B cell (primary cell): ENCODE measurements at regions of chr14 and their contacts with region 1.

Region 1: GRCh38 chr14:103520657-103521437 is 1.8 kb downstream of the CKB start:
- DNase-seq: peak; percentile 85
- ATAC-seq: peak; percentile 78
- H3K4me3 ChIP-seq: peak overlapping the region in 4 of 5 experiments; percentile 52 to 75 (median 59)
- H3K4me3 Mint-ChIP-seq: peak overlapping the region; percentile 74
- H3K27ac ChIP-seq: no peak overlapping the region
- H3K27ac Mint-ChIP-seq: peak overlapping the region; percentile 50
- H3K4me1 ChIP-seq: peaks cover 22 to 31% of the 10 kb centered on the region in 2 donors
- H3K4me1 Mint-ChIP-seq: peaks cover 17% of the 10 kb centered on the region
- H3K27me3 ChIP-seq: peaks cover 0 to 32% (median 11%) of the 10 kb centered on the region in 4 experiments
- H3K27me3 Mint-ChIP-seq: peaks cover 3% of the 10 kb centered on the region
- CTCF ChIP-seq: peak; percentile 67

Region 2: DNA sequence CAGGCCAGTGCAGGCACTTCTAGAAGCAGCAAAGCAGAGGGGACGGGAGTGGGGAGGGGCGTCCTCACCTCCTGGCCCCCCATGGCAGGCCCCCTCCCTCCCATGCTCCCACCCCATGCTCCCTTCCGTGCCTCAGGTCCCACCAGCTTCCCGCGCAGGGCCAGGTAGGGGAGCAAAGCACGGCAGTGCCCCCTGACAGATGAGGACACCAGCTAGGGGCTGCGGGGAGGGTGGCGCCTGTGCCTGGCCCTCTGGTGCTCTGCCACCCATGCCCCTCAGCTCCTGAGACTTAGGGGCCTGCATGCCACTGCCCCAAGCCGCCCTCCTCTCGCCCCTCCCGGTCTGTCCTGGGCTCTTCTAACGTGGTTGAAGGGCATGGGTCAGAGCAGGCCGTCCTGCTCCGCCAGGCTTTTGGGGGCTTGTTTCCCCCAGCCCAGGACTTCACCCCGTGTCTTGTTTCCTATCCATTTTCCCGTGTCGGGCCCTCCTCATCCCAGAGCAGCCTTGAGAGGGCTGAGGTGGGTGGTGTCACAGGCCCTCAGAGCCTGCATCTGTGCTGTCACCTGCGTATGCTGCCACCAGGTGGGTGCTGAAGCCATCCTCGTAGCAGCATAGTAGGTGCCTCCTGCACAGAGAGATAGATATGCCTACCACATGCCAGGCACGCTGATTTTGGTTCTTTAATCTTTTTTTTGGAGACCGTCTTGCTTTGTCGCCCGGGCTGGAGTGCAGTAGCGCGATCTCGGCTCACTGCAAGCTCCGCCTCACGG is 18.4 kb after region 1 on chr14:
- CTCF ChIA-PET with region 1: interaction called, 128 read pairs
- POLR2A ChIA-PET with region 1: interaction called, 3 read pairs
- intact Hi-C with region 1: no loop called
- DNase-seq: no peak
- ATAC-seq: no peak
- H3K4me3 ChIP-seq: no peak overlapping the region
- H3K4me3 Mint-ChIP-seq: no peak overlapping the region
- H3K27ac ChIP-seq: no peak overlapping the region
- H3K27ac Mint-ChIP-seq: no peak overlapping the region
- H3K4me1 ChIP-seq: no peaks in the 10 kb centered on the region
- H3K4me1 Mint-ChIP-seq: no peaks in the 10 kb centered on the region
- H3K27me3 ChIP-seq: peaks cover 0 to 16% (median 2%) of the 10 kb centered on the region in 4 experiments
- H3K27me3 Mint-ChIP-seq: no peaks in the 10 kb centered on the region
- CTCF ChIP-seq: no peak

Region 3: DNA sequence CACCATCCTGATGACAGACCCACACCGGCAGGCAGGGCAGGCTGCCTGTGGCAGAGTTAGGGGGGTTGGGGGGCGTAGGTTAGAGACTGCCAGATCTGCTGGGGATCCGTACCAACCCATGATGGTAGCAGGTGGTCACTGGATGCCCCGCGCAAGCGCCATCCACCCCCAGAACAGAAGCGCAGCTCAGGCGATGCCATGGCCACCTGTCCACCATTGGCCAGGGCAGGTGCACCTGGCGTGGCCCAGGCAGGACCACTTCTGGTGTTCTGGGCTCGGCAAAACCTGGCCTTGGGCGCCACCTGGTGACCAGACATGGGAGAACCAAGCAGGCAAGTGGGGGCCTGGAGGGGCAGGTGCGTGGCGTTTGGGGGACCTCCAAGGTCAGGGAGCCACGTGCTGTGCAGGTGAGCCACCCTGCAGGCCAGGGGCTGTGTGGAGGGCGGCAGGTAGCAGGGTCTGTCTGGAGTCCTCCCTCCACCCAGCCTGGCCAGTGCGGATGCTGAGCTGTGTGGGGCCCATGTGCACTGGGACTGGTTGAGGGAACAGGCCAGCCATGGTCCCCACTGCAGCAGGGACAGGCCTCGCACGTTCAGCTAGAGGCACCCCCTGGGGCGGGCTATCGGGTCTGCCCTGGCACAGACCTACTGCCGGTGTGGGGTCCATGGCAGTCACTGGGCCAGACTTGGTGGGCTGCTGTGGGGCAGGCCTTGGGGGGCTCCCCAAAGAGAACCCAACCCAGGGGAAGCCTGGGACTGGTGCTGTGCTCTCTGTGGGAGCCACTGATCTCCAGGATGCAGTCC is 26.0 kb after region 1 on chr14:
- CTCF ChIA-PET with region 1: interaction called, 128 read pairs
- POLR2A ChIA-PET with region 1: no interaction called
- intact Hi-C with region 1: no loop called
- DNase-seq: peak; percentile 82
- ATAC-seq: peak; percentile 83
- H3K4me3 ChIP-seq: no peak overlapping the region
- H3K4me3 Mint-ChIP-seq: no peak overlapping the region
- H3K27ac ChIP-seq: no peak overlapping the region
- H3K27ac Mint-ChIP-seq: no peak overlapping the region
- H3K4me1 ChIP-seq: peaks cover 0 to 6% of the 10 kb centered on the region in 2 donors
- H3K4me1 Mint-ChIP-seq: peaks cover 4% of the 10 kb centered on the region
- H3K27me3 ChIP-seq: peaks cover 0 to 22% (median 2%) of the 10 kb centered on the region in 4 experiments
- H3K27me3 Mint-ChIP-seq: no peaks in the 10 kb centered on the region
- CTCF ChIP-seq: peak; percentile 95